IMR-90 (cell line): ENCODE measurements at regions of chr6 and their contacts with region 1.

Region 1: GRCh38 chr6:7389451-7390225 is at the starts of genes CAGE1 and RIOK1:
- DNase-seq: peak; percentile 93
- ATAC-seq: peak; percentile 96
- H3K4me3 ChIP-seq: peak within 1 kb of the TSS; percentile 67
- H3K27ac ChIP-seq: peak within 1 kb of the TSS; percentile 82
- H3K4me1 ChIP-seq: no peaks in the 10 kb centered on the region
- H3K27me3 ChIP-seq: no peaks in the 10 kb centered on the region
- CTCF ChIP-seq: 0 out of 2 replicates have a peak, but pooled peaks have one; percentile 1
- POLR2A ChIP-seq: peak; percentile 78
- RAD21 ChIP-seq: no peak
- total RNA-seq, gene CAGE1: under 0.01 TPM in 1 of 2 replicates, not detected in the other
- total RNA-seq, gene RIOK1: 17.0 and 27.2 TPM in 2 replicates

Region 2: GRCh38 chr6:7276199-7276524 is 113.5 kb before region 1 on chr6:
- CTCF ChIA-PET with region 1: no interaction called
- POLR2A ChIA-PET with region 1: no interaction called
- dilution Hi-C with region 1: no loop called
- in situ Hi-C with region 1: no loop called
- intact Hi-C with region 1: loop called (anchors 1 kb)
- DNase-seq: no peak
- ATAC-seq: no peak
- H3K4me3 ChIP-seq: no peak overlapping the region
- H3K27ac ChIP-seq: no peak overlapping the region
- H3K4me1 ChIP-seq: no peaks in the 10 kb centered on the region
- H3K27me3 ChIP-seq: no peaks in the 10 kb centered on the region
- CTCF ChIP-seq: no peak
- POLR2A ChIP-seq: no peak
- RAD21 ChIP-seq: no peak

Region 3: GRCh38 chr6:7300926-7301325 is 88.7 kb before region 1 on chr6:
- CTCF ChIA-PET with region 1: no interaction called
- POLR2A ChIA-PET with region 1: no interaction called
- dilution Hi-C with region 1: no loop called
- in situ Hi-C with region 1: loop called (anchors 10 kb)
- intact Hi-C with region 1: no loop called
- DNase-seq: no peak
- ATAC-seq: no peak
- H3K4me3 ChIP-seq: no peak overlapping the region
- H3K27ac ChIP-seq: no peak overlapping the region
- H3K4me1 ChIP-seq: no peaks in the 10 kb centered on the region
- H3K27me3 ChIP-seq: no peaks in the 10 kb centered on the region
- CTCF ChIP-seq: no peak
- POLR2A ChIP-seq: no peak
- RAD21 ChIP-seq: no peak

Region 4: GRCh38 chr6:7312616-7313504 is 76.8 kb before region 1 on chr6 and contains the start of gene SSR1:
- CTCF ChIA-PET with region 1: no interaction called
- POLR2A ChIA-PET with region 1: interaction called, 3 read pairs
- dilution Hi-C with region 1: no loop called
- in situ Hi-C with region 1: loop called (anchors 10 kb)
- intact Hi-C with region 1: loop called (anchors 1 kb)
- DNase-seq: peak; percentile 95
- ATAC-seq: peak; percentile 99
- H3K4me3 ChIP-seq: peak within 1 kb of the TSS; percentile 84
- H3K27ac ChIP-seq: peak within 1 kb of the TSS; percentile 95
- H3K4me1 ChIP-seq: peaks cover 3% of the 10 kb centered on the region
- H3K27me3 ChIP-seq: no peaks in the 10 kb centered on the region
- CTCF ChIP-seq: no peak
- POLR2A ChIP-seq: peak; percentile 83
- RAD21 ChIP-seq: peak; percentile 11; the same call in 1 of the 2 replicates
- total RNA-seq, gene SSR1: 120 and 213 TPM in 2 replicates